Posterior cingulate gyrus (tissue), 11 donors: ENCODE measurements at regions of chr16 and their contacts with region 1.

Region 1: DNA sequence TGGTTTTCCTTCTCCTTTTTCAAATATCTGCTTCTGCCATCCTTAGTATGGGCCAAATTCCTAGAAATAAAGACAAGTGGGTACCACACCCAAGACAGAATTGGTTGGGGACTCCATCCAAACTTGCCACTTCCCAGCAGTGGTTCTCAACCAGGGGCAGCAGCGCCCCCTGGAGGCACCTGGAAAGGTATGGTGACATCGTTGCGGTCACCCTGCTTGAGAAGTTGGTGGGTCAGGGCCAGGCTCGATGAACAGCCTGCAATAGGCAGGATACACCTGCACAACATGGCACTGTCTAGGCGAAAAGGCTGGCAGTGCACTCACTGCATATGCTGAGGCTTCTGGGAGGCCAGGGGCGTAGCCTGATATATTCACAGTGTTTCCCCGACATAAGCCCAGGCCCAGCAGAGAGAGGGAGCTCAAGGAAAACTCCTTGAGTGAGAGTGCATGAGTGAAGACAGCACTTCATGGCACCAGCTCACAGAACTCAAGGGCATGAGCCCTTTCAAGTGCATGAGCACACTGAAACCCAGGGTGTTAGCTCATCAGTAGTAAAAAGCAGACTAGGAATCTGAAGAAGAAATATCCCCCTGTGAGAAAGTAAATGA is 57.7 kb downstream of the CMC2 start:
- DNase-seq: peak in 8 of 10 donors; percentile 25 to 94 (median 54)

Region 2: GRCh38 chr16:80540516-80541272 is 408.3 kb before region 1 on chr16 and contains the start of gene DYNLRB2:
- intact Hi-C with region 1: loop called (anchors 10 kb)
- DNase-seq: peak; percentile 90 to 99 (median 92)

Region 3: GRCh38 chr16:80883159-80883642 is 65.8 kb before region 1 on chr16:
- intact Hi-C with region 1: no loop called
- DNase-seq: no peak

Region 4: GRCh38 chr16:80924372-80924978 is 24.5 kb before region 1 on chr16:
- intact Hi-C with region 1: loop called (anchors 1 kb)
- DNase-seq: peak in 6 of 10 donors; percentile 20 to 90 (median 41)

Region 5: GRCh38 chr16:81151648-81152310 is 202.8 kb after region 1 on chr16:
- intact Hi-C with region 1: no loop called
- DNase-seq: peak in 1 of 10 donors; percentile 30